Mammary epithelial cell (primary cell): ENCODE measurements at regions of chr4 and their contacts with region 1.

Region 1: DNA sequence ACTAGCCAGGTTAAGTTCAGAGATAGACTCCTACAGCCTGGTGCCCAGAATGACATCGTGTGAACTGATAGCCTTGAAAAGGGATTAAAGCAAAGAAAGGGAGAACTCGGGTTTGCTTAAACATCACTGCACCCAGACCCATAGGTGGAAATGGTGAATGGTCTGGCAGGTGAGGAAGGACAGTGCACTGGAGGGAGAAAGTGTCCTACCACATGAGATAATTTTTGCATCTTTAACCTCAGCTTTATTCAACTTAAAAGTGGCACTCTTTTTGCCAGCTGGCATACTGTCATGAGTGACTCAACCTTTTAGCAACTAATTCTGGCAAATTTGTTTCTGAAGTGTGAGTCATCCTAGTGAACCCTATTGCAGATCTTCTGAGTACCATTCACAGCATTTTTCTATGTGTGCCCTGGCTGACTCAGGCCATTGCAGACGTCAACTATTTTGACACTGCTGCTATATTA is 53.0 kb upstream of the DAPP1 start:
- DNase-seq: peak; percentile 94
- H3K4me3 ChIP-seq: no peak overlapping the region
- H3K27ac ChIP-seq: no peak overlapping the region
- H3K4me1 ChIP-seq: peaks cover 15% of the 10 kb centered on the region
- H3K27me3 ChIP-seq: no peaks in the 10 kb centered on the region
- CTCF ChIP-seq: no peak

Region 2: DNA sequence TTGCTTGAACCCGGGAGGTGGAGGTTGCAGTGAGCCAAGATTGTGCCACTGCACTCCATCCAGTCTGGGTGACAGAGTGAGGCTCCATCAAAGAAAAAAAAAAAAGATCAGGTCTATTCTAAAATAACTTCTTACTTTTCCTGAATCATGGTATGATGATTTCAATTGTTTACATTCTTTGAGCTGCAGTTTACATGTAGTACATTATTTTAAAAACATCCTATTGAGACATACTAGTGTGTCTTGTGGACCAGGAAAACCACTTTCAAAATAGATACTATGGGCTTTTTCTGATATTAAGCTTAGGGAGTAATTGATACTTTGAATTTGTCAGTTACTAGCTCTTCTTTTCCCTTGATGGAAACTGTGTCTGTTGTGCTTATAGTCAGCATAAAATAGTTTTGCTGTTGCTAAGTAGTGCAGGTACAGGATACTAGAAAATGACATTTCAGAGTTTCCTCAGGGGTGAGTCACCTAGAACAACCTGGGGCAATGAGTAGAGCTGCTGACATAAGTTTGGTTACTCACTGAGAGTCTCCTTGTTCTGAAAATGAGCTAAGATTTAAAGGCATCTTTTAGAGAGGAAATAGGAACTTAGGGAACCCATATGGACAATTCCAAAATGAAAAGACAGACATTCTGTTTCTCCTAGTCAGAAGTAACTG is 52.9 kb before region 1 on chr4:
- CTCF ChIA-PET with region 1: no interaction called
- dilution Hi-C with region 1: no loop called
- in situ Hi-C with region 1: no loop called
- intact Hi-C with region 1: loop called (anchors 2 kb)
- DNase-seq: peak; percentile 95
- H3K4me3 ChIP-seq: no peak overlapping the region
- H3K27ac ChIP-seq: peak overlapping the region; percentile 90
- H3K4me1 ChIP-seq: peaks cover 32% of the 10 kb centered on the region
- H3K27me3 ChIP-seq: no peaks in the 10 kb centered on the region
- CTCF ChIP-seq: no peak

Region 3: GRCh38 chr4:100198061-100198460 is 434.4 kb after region 1 on chr4:
- CTCF ChIA-PET with region 1: no interaction called
- dilution Hi-C with region 1: no loop called
- in situ Hi-C with region 1: no loop called
- intact Hi-C with region 1: no loop called
- DNase-seq: no peak
- H3K4me3 ChIP-seq: no peak overlapping the region
- H3K27ac ChIP-seq: no peak overlapping the region
- H3K4me1 ChIP-seq: no peaks in the 10 kb centered on the region
- H3K27me3 ChIP-seq: peaks cover 2% of the 10 kb centered on the region
- CTCF ChIP-seq: no peak